Activated CD4-positive, alpha-beta T cell treated with anti-CD3 and anti-CD28 coated beads, Interleukin-2, amount 10 ng/mL, durations not matched to agents 24 days and 14 days (primary cell): ENCODE measurements at regions of chr1 and their contacts with region 1.

Region 1: GRCh38 chr1:26874896-26875295 is 11.9 kb downstream of the SFN start:
- DNase-seq: no peak
- H3K4me3 Mint-ChIP-seq: no peak overlapping the region
- H3K27ac Mint-ChIP-seq: no peak overlapping the region
- H3K4me1 Mint-ChIP-seq: peaks cover 2% of the 10 kb centered on the region
- H3K27me3 Mint-ChIP-seq: no peaks in the 10 kb centered on the region

Region 2: DNA sequence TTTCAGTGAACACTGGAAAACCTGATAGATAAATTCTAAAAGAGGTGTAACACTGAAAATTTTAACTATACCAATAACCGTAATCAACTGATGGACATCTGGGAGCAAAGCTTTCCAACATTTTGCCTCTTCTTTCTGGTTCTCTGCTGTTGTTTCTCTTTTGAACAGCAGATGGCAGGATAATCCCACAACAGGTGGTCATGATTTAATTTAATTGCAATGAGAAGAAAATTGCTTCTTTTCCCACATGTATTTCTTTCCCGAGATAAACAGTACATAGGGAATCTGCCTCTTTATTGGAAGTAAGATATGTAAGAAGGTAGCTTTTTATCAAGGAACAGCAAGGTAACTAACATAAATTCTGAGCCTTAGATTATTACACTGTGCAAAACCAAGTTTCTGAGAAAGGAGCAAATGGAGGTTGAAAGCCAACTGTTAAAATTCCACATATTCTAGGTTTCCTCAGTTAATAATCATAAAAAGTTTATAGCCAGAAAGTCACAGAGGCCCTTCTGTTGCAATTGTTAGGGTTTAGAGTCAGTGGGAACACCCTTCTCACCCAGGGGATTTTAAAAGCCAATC is 272.4 kb before region 1 on chr1:
- intact Hi-C with region 1: loop called (anchors 1 kb)
- DNase-seq: peak; percentile 89
- H3K4me3 Mint-ChIP-seq: no peak overlapping the region
- H3K27ac Mint-ChIP-seq: no peak overlapping the region
- H3K4me1 Mint-ChIP-seq: peaks cover 9% of the 10 kb centered on the region
- H3K27me3 Mint-ChIP-seq: peaks cover 3% of the 10 kb centered on the region

Region 3: DNA sequence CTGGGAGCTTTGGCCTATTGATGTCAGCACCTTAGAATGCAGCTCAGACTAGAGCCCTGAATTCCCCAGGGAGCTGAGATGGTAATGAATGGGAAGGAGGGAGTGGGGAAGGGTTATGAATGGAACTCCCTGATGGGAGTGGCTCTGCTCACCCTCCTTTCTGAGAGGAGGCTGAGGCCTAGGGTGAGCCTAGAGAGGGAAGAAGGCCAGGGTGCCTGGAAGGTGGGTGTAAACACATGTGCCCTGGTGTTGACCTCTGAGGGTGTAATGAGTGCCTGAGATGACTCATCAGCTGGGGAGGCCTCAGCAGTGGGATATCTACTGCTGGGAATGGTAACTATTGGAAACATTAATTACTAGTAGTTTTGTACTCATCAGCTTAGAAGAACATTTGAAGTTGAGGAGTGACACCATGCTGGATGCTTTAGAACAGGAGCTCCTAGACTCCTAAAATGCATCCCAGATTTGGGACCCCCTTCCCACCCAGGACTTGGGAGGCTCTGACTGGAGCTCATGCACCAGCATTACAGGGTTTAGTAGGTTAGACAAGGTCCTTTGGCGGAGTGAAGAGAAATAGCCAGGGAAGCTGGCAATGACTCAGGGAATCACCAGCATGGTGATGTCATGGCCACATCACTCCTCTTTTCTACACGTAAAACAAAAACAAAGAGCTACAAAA is 103.1 kb before region 1 on chr1:
- intact Hi-C with region 1: no loop called
- DNase-seq: no peak
- H3K4me3 Mint-ChIP-seq: no peak overlapping the region
- H3K27ac Mint-ChIP-seq: peak overlapping the region; percentile 74
- H3K4me1 Mint-ChIP-seq: peaks cover 25% of the 10 kb centered on the region
- H3K27me3 Mint-ChIP-seq: no peaks in the 10 kb centered on the region

Region 4: GRCh38 chr1:26811057-26811456 is 63.8 kb before region 1 on chr1:
- intact Hi-C with region 1: loop called (anchors 2 kb)
- DNase-seq: no peak
- H3K4me3 Mint-ChIP-seq: no peak overlapping the region
- H3K27ac Mint-ChIP-seq: no peak overlapping the region
- H3K4me1 Mint-ChIP-seq: peaks cover 17% of the 10 kb centered on the region
- H3K27me3 Mint-ChIP-seq: no peaks in the 10 kb centered on the region

Region 5: DNA sequence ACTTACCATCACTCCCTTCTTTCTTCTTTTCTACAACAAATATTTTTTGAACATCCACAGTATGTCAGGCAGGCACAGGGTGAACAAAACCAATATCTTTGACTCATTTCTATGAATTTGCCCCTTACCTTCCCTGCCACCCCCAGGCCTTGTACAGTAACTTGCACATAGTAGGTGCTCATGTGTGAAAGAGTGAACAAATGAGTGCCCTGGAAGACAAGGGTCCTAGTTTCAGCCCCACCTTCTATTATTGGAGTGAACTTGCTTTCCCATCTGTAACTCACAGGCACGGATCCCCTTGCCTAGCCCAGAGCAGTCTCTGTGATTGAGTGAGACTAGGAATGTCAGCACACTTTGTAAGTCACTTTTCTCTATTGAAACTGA is 35.6 kb before region 1 on chr1:
- intact Hi-C with region 1: no loop called
- DNase-seq: no peak
- H3K4me3 Mint-ChIP-seq: no peak overlapping the region
- H3K27ac Mint-ChIP-seq: peak overlapping the region; percentile 70
- H3K4me1 Mint-ChIP-seq: peaks cover 21% of the 10 kb centered on the region
- H3K27me3 Mint-ChIP-seq: no peaks in the 10 kb centered on the region

Region 6: DNA sequence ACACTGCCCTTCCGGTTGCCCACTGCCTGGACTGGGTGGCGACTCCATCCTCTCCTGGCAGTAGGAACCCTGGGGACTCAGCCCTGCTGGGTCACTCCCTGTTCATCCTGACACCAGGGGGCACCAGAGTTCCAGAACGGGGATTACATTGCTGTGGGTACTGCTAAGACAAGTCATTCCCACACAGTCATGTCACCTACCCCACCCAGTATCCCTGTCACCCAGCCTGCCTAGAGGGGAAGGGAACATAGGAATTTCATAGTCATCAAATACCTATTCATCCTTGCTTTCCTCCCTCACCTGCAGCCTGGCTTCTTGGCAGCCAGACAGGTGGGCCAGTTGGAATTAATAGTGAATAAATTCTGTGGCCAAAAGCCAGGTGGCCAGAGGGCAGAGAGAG is 21.7 kb before region 1 on chr1:
- intact Hi-C with region 1: loop called (anchors 1 kb)
- DNase-seq: peak; percentile 93
- H3K4me3 Mint-ChIP-seq: no peak overlapping the region
- H3K27ac Mint-ChIP-seq: no peak overlapping the region
- H3K4me1 Mint-ChIP-seq: peaks cover 1% of the 10 kb centered on the region
- H3K27me3 Mint-ChIP-seq: no peaks in the 10 kb centered on the region